A673 (cell line): ENCODE measurements at regions of chr22 and their contacts with region 1.

Region 1: DNA sequence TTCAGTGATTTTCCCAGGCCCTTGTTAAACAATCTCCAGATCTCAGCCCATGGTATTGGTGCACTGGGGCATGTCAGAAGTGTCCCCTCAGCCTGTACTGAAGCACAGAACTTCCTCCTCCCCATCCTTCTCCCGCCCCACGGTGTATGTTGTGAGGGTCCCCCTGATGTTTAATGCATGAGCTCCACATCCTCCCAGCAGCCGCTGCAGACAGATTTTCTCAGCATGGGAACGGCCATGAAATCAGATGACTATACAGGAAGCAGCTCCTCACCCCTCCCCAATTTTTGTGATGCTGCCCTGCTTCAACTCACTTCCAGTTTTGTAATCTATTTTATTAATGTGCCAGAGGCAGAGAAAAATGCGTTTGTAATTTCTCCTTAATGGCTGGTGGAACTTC is 406.0 kb downstream of the MIAT start:
- DNase-seq: peak; percentile 83
- H3K4me3 ChIP-seq: no peak overlapping the region
- H3K27ac ChIP-seq: peak overlapping the region; percentile 76
- H3K4me1 ChIP-seq: peaks cover 53% of the 10 kb centered on the region
- H3K27me3 ChIP-seq: no peaks in the 10 kb centered on the region
- CTCF ChIP-seq: no peak

Region 2: DNA sequence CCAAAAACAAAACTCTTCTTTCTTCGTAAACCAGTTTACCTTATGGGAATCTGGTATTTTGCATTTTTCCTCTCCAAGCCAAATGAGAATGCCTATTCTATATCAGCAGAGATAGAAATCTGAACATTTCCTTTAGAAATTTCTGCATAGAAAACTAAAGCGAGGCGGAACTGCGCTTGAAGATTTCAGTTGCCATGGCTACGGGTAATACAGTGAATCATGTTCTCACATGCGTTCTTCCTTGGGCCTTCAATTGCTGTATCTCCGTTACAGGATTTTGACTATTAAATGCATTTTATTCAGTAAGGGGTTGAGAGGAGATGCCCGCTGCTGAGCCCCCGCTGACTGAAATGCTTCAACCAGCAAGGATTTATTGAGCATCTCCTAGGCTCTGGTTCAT is 1971.9 kb before region 1 on chr22:
- CTCF ChIA-PET with region 1: no interaction called
- POLR2A ChIA-PET with region 1: no interaction called
- intact Hi-C with region 1: no loop called
- DNase-seq: no peak
- H3K4me3 ChIP-seq: no peak overlapping the region
- H3K27ac ChIP-seq: no peak overlapping the region
- H3K4me1 ChIP-seq: no peaks in the 10 kb centered on the region
- H3K27me3 ChIP-seq: no peaks in the 10 kb centered on the region
- CTCF ChIP-seq: no peak

Region 3: DNA sequence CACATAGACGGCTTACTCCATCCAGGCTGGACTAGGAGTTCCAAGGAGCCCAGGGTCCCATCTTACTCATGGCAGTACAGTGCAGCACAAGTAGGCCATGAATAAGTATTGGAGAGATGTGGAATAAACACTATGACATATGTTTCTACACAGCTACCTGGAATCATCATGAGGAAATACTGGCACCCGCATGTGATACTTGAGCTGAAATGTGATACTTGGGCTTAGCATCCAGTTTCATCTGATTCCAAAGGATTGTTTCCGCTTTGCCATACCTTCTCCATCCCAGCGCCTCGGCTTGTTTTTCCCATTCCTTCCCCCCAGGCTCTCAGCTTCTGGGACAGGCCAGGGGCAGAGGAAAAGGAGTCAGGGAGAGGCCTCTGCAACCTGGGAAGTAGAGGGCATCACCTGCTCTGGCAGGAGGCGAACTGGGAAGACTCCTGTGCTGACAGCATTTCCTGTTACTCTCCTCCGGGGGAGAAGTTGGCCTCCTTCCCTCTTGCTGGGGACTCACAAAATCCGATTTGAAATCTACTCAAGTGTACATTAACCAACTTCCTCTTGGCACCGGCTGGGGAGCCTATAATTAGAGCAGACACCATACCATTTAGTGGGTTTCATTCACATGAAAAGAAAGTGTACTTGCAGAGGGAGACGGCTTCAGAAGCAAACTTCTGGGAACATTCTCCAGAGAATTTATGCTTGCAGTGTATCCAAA is 218.2 kb before region 1 on chr22:
- CTCF ChIA-PET with region 1: no interaction called
- POLR2A ChIA-PET with region 1: no interaction called
- intact Hi-C with region 1: loop called (anchors 10 kb)
- DNase-seq: peak; percentile 92
- H3K4me3 ChIP-seq: peak overlapping the region; percentile 8
- H3K27ac ChIP-seq: peak overlapping the region; percentile 60
- H3K4me1 ChIP-seq: peaks cover 46% of the 10 kb centered on the region
- H3K27me3 ChIP-seq: no peaks in the 10 kb centered on the region
- CTCF ChIP-seq: no peak